HepG2 (cell line): ENCODE measurements at regions of chr2 and their contacts with region 1.

Region 1: GRCh38 chr2:164599966-164600589 is 21.2 kb downstream of the GRB14 start:
- DNase-seq: peak; percentile 88
- ATAC-seq: peak; percentile 99
- H3K4me3 ChIP-seq: no peak overlapping the region
- H3K27ac ChIP-seq: peak overlapping the region; percentile 32
- H3K4me1 ChIP-seq: peaks cover 12% of the 10 kb centered on the region
- H3K27me3 ChIP-seq: no peaks in the 10 kb centered on the region
- CTCF ChIP-seq: peak; percentile 91
- EP300 ChIP-seq: no peak
- POLR2A ChIP-seq: no peak
- RAD21 ChIP-seq: peak; percentile 75

Region 2: GRCh38 chr2:163155279-163155883 is 1444.7 kb before region 1 on chr2:
- CTCF ChIA-PET with region 1: interaction called, 3 read pairs
- POLR2A ChIA-PET with region 1: no interaction called
- in situ Hi-C with region 1: no loop called
- intact Hi-C with region 1: loop called (anchors 10 kb)
- DNase-seq: peak; percentile 38
- ATAC-seq: peak; percentile 90
- H3K4me3 ChIP-seq: no peak overlapping the region
- H3K27ac ChIP-seq: no peak overlapping the region
- H3K4me1 ChIP-seq: no peaks in the 10 kb centered on the region
- H3K27me3 ChIP-seq: no peaks in the 10 kb centered on the region
- CTCF ChIP-seq: peak; percentile 66
- EP300 ChIP-seq: no peak
- POLR2A ChIP-seq: no peak
- RAD21 ChIP-seq: no peak

Region 3: DNA sequence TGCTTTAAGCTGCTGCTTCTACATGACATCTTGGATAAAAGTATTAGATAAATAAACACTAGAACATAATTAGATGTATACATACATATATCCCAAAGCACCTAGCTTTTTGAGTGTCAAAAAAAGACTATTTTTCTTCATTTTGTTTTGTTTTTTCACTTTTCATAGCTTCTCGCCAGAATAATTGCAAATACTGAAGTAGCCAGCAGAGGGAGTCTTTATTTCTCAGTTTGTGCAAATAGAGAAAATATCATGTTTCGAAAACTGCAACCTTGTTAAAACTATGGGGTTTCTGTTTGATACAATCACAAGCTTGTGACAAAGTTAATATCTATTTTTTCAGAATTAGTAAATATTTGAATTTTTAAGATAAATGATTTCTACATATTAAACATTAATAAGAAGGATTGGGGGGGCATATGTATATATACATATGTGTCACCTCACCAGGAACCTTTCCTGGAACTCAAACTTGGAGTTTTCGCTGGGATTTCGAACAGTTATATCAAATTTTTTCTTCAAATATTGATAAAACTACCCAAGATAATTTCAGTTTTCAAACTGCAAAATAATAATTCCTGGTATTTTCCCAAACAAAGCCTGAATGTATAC is 39.8 kb before region 1 on chr2:
- CTCF ChIA-PET with region 1: interaction called, 166 read pairs
- POLR2A ChIA-PET with region 1: no interaction called
- in situ Hi-C with region 1: loop called (anchors 5 kb)
- intact Hi-C with region 1: loop called (anchors 1 kb)
- DNase-seq: peak; percentile 49
- ATAC-seq: peak; percentile 26; the same call in 1 of the 3 replicates
- H3K4me3 ChIP-seq: no peak overlapping the region
- H3K27ac ChIP-seq: no peak overlapping the region
- H3K4me1 ChIP-seq: no peaks in the 10 kb centered on the region
- H3K27me3 ChIP-seq: no peaks in the 10 kb centered on the region
- CTCF ChIP-seq: peak; percentile 74
- EP300 ChIP-seq: no peak
- POLR2A ChIP-seq: no peak
- RAD21 ChIP-seq: peak; percentile 42; the same call in 1 of the 2 replicates

Region 4: GRCh38 chr2:164569378-164569777 is 30.7 kb before region 1 on chr2:
- CTCF ChIA-PET with region 1: interaction called, 166 read pairs
- POLR2A ChIA-PET with region 1: no interaction called
- in situ Hi-C with region 1: no loop called
- intact Hi-C with region 1: no loop called
- DNase-seq: no peak
- ATAC-seq: no peak
- H3K4me3 ChIP-seq: no peak overlapping the region
- H3K27ac ChIP-seq: no peak overlapping the region
- H3K4me1 ChIP-seq: peaks cover 50% of the 10 kb centered on the region
- H3K27me3 ChIP-seq: no peaks in the 10 kb centered on the region
- CTCF ChIP-seq: no peak
- EP300 ChIP-seq: no peak
- POLR2A ChIP-seq: no peak
- RAD21 ChIP-seq: no peak

Region 5: DNA sequence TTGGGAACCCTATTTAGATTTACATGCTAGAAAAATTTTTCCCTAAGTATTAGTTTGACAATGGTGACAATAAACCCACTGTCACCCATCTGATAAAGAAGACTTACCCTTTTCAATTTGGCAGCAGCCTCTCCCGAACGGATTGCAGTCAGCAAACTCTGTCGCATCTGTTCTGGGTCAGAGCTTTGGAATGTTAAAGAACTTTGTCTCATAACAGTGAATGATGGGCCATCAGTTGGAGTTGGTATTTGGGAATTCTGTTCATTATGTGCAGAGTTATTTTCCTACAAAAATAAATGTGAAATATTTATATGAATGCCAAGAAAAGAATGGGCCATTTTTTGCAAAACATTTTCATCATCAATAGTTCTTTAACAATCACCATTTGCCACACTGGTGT is 92.0 kb after region 1 on chr2:
- CTCF ChIA-PET with region 1: interaction called, 4 read pairs
- POLR2A ChIA-PET with region 1: no interaction called
- in situ Hi-C with region 1: no loop called
- intact Hi-C with region 1: loop called (anchors 5 kb)
- DNase-seq: peak; percentile 43
- ATAC-seq: no peak
- H3K4me3 ChIP-seq: no peak overlapping the region
- H3K27ac ChIP-seq: peak overlapping the region; percentile 37
- H3K4me1 ChIP-seq: peaks cover 63% of the 10 kb centered on the region
- H3K27me3 ChIP-seq: no peaks in the 10 kb centered on the region
- CTCF ChIP-seq: no peak
- EP300 ChIP-seq: no peak
- POLR2A ChIP-seq: no peak
- RAD21 ChIP-seq: no peak

Region 6: DNA sequence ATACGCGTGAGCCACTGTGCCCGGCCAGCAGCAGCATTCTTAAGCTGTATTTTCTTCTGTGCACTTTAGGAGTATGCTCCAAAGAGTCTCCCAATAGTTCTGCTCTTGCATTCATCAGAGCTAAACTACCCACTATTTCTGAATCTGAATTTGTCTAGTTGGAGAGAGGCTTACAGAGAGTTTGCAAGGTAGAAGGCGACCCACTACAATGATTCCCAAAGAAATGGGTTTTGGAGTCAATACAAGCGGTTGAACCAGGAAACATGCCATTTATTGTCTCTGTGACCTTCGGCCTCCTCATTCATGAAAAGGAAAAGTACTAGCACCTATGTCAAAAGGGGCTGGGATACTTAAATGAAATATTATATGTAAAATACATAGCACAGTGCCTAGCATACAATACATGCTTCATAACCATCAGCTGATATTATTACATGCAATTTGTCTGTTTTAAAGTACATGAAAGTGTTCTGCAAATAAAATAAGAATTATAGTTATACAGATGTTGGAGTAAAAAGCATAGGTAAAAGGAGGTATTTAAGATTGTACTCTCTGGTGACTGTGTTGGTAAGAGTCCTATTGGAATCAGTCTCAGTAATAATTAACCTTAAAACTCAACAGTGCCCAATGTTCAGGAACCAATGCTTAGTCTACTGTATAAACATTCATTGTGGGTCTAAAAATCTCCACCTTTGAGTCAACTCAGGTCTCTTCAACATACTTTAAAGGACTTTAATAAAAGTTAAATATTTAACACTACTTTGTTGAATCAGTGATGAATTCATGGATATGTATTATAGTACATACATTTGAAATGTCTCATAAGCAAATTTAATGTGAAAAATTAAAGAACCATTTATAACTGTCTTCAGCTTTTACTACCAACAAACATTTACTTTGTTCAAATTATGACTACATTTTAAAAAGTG is 111.0 kb after region 1 on chr2:
- CTCF ChIA-PET with region 1: interaction called, 20 read pairs
- POLR2A ChIA-PET with region 1: no interaction called
- in situ Hi-C with region 1: no loop called
- intact Hi-C with region 1: loop called (anchors 1 kb)
- DNase-seq: peak; percentile 98
- ATAC-seq: peak; percentile 96
- H3K4me3 ChIP-seq: peak overlapping the region; percentile 24 to 54 (median 53)
- H3K27ac ChIP-seq: peak overlapping the region; percentile 96
- H3K4me1 ChIP-seq: peaks cover 94% of the 10 kb centered on the region
- H3K27me3 ChIP-seq: no peaks in the 10 kb centered on the region
- CTCF ChIP-seq: no peak
- EP300 ChIP-seq: peak in 1 of 2 experiments; percentile 81; a peak in 2 of 4 replicates
- POLR2A ChIP-seq: peak; percentile 62 to 77
- RAD21 ChIP-seq: no peak; the same call in 1 of the 2 replicates

Region 7: DNA sequence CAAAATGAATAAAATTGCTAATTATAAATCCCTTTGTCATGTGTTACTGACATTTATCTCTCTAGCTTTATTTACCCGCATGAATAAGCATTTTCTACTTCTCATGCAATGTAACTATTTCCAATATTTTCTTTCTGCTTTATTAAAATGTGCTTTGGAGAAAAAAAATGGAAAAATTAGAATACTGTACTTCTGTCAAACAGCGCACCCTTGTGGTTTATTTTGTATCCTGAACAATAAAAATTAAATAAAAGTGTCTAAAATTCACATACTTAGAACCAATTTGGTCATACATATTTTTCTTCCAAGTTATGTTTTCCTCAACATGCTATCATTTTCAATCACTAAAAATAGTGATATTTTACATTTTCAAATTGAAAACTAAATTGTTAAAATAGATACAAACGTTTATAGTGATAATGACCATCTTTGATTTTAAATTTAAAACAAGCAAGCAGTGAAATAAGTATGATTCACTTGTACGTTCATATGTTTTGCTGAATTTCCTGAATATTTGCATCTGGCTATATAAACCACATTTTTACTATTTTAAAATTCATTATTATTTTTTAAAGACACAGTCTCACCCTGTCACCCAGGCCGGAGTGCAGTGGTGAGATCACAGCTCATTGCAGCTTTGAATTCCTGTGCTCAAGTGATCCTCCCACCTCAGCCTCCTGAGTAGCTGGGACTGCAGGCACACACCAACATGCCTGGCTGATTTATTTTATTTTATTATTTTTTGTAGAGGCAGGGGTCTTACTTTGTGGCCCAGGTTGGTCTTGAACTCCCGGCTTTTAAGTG is 117.1 kb after region 1 on chr2:
- CTCF ChIA-PET with region 1: interaction called, 20 read pairs
- POLR2A ChIA-PET with region 1: no interaction called
- in situ Hi-C with region 1: no loop called
- intact Hi-C with region 1: loop called (anchors 1 kb)
- DNase-seq: peak; percentile 50
- ATAC-seq: no peak
- H3K4me3 ChIP-seq: no peak overlapping the region
- H3K27ac ChIP-seq: peak overlapping the region; percentile 20
- H3K4me1 ChIP-seq: peaks cover 48% of the 10 kb centered on the region
- H3K27me3 ChIP-seq: no peaks in the 10 kb centered on the region
- CTCF ChIP-seq: peak; percentile 59
- EP300 ChIP-seq: no peak
- POLR2A ChIP-seq: no peak
- RAD21 ChIP-seq: peak; percentile 70; the same call in 1 of the 2 replicates